Calu3 (cell line): ENCODE measurements at regions of chrX and their contacts with region 1.

Region 1: GRCh38 chrX:123779908-123780396 is 47.1 kb upstream of the THOC2 start:
- DNase-seq: peak; percentile 12
- H3K4me3 Mint-ChIP-seq: peak overlapping the region; percentile 2
- H3K27ac Mint-ChIP-seq: peak overlapping the region; percentile 72
- H3K4me1 Mint-ChIP-seq: peaks cover 17% of the 10 kb centered on the region
- H3K27me3 Mint-ChIP-seq: no peaks in the 10 kb centered on the region
- CTCF ChIP-seq: no peak

Region 2: GRCh38 chrX:123732670-123733363 is 47.1 kb before region 1 on chrX and contains the start of gene THOC2:
- CTCF ChIA-PET with region 1: interaction called, 4 read pairs
- intact Hi-C with region 1: loop called (anchors 2 kb)
- DNase-seq: peak; percentile 86
- H3K4me3 Mint-ChIP-seq: peak within 1 kb of the TSS; percentile 92
- H3K27ac Mint-ChIP-seq: peak within 1 kb of the TSS; percentile 96
- H3K4me1 Mint-ChIP-seq: no peaks in the 10 kb centered on the region
- H3K27me3 Mint-ChIP-seq: no peaks in the 10 kb centered on the region
- CTCF ChIP-seq: no peak
- total RNA-seq, gene THOC2: 107 and 112 TPM in 2 replicates

Region 3: DNA sequence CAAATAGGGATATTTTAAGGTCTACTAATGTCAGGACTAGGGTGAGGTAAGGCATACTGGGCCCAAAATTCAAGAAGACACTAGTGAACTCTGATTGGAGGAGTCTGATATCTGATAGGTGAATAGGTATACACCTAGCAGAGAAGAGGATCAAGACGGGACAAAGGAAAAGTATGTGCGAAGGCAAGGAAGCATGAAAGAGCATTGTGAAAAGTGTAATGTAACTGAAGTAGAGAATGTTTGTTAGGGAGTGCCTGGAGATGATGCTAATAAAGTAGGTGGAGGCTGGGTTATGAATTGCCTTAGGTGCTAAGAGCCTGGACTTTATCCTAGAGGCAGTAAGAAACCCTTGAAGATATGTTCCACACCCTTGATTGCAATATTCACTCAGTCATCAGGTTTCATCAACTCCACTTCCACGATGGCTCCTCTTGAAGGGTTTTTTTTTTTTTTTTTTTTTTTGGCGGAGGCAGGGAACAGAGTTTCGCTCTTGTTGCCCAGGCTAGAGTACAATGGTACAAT is 30.0 kb after region 1 on chrX:
- CTCF ChIA-PET with region 1: no interaction called
- intact Hi-C with region 1: loop called (anchors 2 kb)
- DNase-seq: no peak
- H3K4me3 Mint-ChIP-seq: no peak overlapping the region
- H3K27ac Mint-ChIP-seq: no peak overlapping the region
- H3K4me1 Mint-ChIP-seq: peaks cover 3% of the 10 kb centered on the region
- H3K27me3 Mint-ChIP-seq: no peaks in the 10 kb centered on the region
- CTCF ChIP-seq: no peak

Region 4: GRCh38 chrX:125236955-125237354 is 1457.0 kb after region 1 on chrX:
- CTCF ChIA-PET with region 1: no interaction called
- intact Hi-C with region 1: no loop called
- DNase-seq: no peak
- H3K4me3 Mint-ChIP-seq: no peak overlapping the region
- H3K27ac Mint-ChIP-seq: no peak overlapping the region
- H3K4me1 Mint-ChIP-seq: no peaks in the 10 kb centered on the region
- H3K27me3 Mint-ChIP-seq: no peaks in the 10 kb centered on the region
- CTCF ChIP-seq: no peak